ENCODE measurements at regions of chr12 and their contacts with region 1.

Region 1: GRCh38 chr12:56333679-56334489 is at the start of gene PAN2:
- DNase-seq: peak; percentile 84 to 98 (median 89)
- ATAC-seq: peak; percentile 74
- H3K4me3 ChIP-seq: peak within 1 kb of the TSS; percentile 71
- H3K4me3 Mint-ChIP-seq: peak within 1 kb of the TSS; percentile 94
- H3K27ac ChIP-seq: peak within 1 kb of the TSS; percentile 99 to 100
- H3K27ac Mint-ChIP-seq: peak within 1 kb of the TSS; percentile 100
- H3K4me1 ChIP-seq: peaks cover 32% of the 10 kb centered on the region
- H3K4me1 Mint-ChIP-seq: peaks cover 56% of the 10 kb centered on the region
- H3K27me3 ChIP-seq: no peaks in the 10 kb centered on the region
- H3K27me3 Mint-ChIP-seq: no peaks in the 10 kb centered on the region
- CTCF ChIP-seq: peak; percentile 73
- total RNA-seq, gene PAN2: 104 to 107 TPM

Region 2: GRCh38 chr12:55607821-55608594 is 725.9 kb before region 1 on chr12:
- CTCF ChIA-PET with region 1: no interaction called
- POLR2A ChIA-PET with region 1: no interaction called
- intact Hi-C with region 1: no loop called
- DNase-seq: no peak
- ATAC-seq: no peak
- H3K4me3 ChIP-seq: no peak overlapping the region
- H3K4me3 Mint-ChIP-seq: no peak overlapping the region
- H3K27ac ChIP-seq: no peak overlapping the region
- H3K27ac Mint-ChIP-seq: no peak overlapping the region
- H3K4me1 ChIP-seq: no peaks in the 10 kb centered on the region
- H3K4me1 Mint-ChIP-seq: no peaks in the 10 kb centered on the region
- H3K27me3 ChIP-seq: peaks cover 4 to 9% of the 10 kb centered on the region in 2 experiments
- H3K27me3 Mint-ChIP-seq: peaks cover 41% of the 10 kb centered on the region
- CTCF ChIP-seq: no peak

Region 3: GRCh38 chr12:56062996-56063395 is 270.9 kb before region 1 on chr12:
- CTCF ChIA-PET with region 1: no interaction called
- POLR2A ChIA-PET with region 1: no interaction called
- intact Hi-C with region 1: no loop called
- DNase-seq: no peak
- ATAC-seq: no peak
- H3K4me3 ChIP-seq: no peak overlapping the region
- H3K4me3 Mint-ChIP-seq: no peak overlapping the region
- H3K27ac ChIP-seq: no peak overlapping the region
- H3K27ac Mint-ChIP-seq: no peak overlapping the region
- H3K4me1 ChIP-seq: no peaks in the 10 kb centered on the region
- H3K4me1 Mint-ChIP-seq: no peaks in the 10 kb centered on the region
- H3K27me3 ChIP-seq: no peaks in the 10 kb centered on the region
- H3K27me3 Mint-ChIP-seq: no peaks in the 10 kb centered on the region
- CTCF ChIP-seq: no peak

Region 4: DNA sequence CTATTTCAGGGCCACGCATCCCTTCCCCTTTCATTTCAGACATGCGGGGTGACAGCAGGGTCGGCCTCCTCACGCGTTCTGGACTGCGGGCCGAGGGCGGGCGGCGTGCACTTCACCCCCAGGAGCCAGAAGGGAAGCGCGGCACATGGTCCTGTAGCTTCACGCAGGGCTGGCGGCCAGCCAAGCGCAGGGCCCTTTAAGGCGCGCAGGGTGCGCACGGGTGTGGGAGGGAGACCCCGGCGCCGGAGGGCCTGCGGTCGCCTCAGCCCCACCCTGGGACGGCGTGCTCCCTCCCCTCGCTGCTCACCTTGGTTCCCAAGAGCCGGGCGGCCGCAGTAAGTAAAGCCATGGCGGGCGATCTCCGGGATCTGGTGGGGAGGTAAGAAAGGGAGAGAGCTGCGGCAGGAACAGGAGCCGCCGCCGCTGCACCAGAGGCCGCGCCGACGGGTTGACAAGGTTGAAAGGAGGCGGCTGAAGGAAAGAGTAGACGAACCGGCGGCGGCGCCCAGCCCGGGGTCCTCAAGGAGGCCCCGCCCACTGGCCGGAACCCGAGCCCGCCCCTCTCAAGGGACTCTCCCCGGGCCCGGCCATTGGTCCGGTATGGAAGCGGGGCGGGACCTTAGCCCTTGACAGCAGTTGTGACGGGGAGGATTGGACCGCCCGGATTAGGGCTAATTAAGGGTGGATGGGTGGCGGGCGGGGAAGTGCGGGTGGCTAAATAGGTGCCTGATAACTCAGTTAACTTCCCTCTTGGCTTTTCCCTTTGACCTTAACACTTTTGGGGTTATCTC is 33.8 kb before region 1 on chr12 and contains the start of gene CS:
- CTCF ChIA-PET with region 1: no interaction called
- POLR2A ChIA-PET with region 1: no interaction called
- intact Hi-C with region 1: loop called in 1 of 2 experiments (anchors 2 kb)
- DNase-seq: peak; percentile 95 to 99 (median 98)
- ATAC-seq: peak; percentile 91
- H3K4me3 ChIP-seq: peak within 1 kb of the TSS; percentile 72
- H3K4me3 Mint-ChIP-seq: peak within 1 kb of the TSS; percentile 98
- H3K27ac ChIP-seq: peak within 1 kb of the TSS; percentile 91 to 96
- H3K27ac Mint-ChIP-seq: peak within 1 kb of the TSS; percentile 97
- H3K4me1 ChIP-seq: peaks cover 56% of the 10 kb centered on the region
- H3K4me1 Mint-ChIP-seq: peaks cover 68% of the 10 kb centered on the region
- H3K27me3 ChIP-seq: no peaks in the 10 kb centered on the region
- H3K27me3 Mint-ChIP-seq: no peaks in the 10 kb centered on the region
- CTCF ChIP-seq: no peak
- total RNA-seq, gene CS: 139 to 145 TPM

Region 5: DNA sequence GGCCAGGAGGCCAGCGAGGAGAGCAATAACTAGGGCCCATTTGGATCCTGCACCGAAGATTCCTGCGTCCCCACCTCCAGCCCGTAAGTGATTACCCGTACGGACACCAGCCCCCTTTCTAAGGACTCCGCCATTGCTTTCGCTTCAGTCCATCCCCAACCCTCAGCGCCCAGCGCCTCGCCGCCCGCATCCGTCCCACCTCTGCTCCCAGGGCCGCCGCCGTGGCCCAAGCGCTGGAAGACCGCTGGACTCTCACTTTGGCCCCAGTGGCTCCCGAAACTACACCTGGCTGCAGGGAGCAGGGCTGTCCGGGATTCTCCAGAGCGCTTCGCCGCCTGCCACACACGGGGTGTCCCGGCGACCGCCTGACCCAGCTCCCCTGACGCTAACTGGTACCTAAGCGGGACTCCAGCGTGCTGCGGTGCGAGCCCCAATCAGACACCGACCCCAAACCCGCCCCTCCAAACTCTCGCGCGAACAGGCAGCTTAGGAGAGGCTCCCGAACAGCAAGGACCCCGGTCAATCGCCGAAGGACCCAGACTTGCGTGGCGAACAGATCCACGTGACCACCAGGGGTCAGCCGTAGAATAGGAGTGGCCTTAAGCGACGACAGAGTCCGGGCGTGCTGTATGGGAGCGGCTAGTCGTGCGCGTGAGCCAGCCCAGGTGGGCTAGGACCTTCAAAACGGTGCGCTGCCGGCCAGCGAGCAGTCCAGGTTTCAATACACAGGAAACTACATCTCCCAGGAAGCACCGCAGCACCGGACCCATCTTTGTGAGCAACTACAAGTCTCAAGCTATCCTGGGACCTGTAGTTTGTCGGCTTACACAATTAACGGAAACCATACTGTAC is 18.0 kb before region 1 on chr12 and contains the start of gene CNPY2:
- CTCF ChIA-PET with region 1: interaction called, 5 read pairs
- POLR2A ChIA-PET with region 1: interaction called, 56 read pairs
- intact Hi-C with region 1: loop called (anchors 2 kb)
- DNase-seq: peak; percentile 86 to 96 (median 90)
- ATAC-seq: peak; percentile 93
- H3K4me3 ChIP-seq: peak within 1 kb of the TSS; percentile 100
- H3K4me3 Mint-ChIP-seq: peak within 1 kb of the TSS; percentile 99
- H3K27ac ChIP-seq: peak within 1 kb of the TSS; percentile 84 to 98
- H3K27ac Mint-ChIP-seq: peak within 1 kb of the TSS; percentile 98
- H3K4me1 ChIP-seq: peaks cover 17% of the 10 kb centered on the region
- H3K4me1 Mint-ChIP-seq: peaks cover 19% of the 10 kb centered on the region
- H3K27me3 ChIP-seq: no peaks in the 10 kb centered on the region
- H3K27me3 Mint-ChIP-seq: no peaks in the 10 kb centered on the region
- CTCF ChIP-seq: no peak
- total RNA-seq, gene CNPY2: 30.5 to 33.4 TPM

Region 6: GRCh38 chr12:56346703-56347102 is 12.8 kb after region 1 on chr12:
- CTCF ChIA-PET with region 1: interaction called, 8 read pairs
- POLR2A ChIA-PET with region 1: interaction called, 15 read pairs
- intact Hi-C with region 1: no loop called
- DNase-seq: peak in 4 of 14 experiments; percentile 14 to 54 (median 30)
- ATAC-seq: no peak
- H3K4me3 ChIP-seq: no peak overlapping the region
- H3K4me3 Mint-ChIP-seq: no peak overlapping the region
- H3K27ac ChIP-seq: no peak overlapping the region
- H3K27ac Mint-ChIP-seq: no peak overlapping the region
- H3K4me1 ChIP-seq: peaks cover under 1% of the 10 kb centered on the region
- H3K4me1 Mint-ChIP-seq: peaks cover under 1% of the 10 kb centered on the region
- H3K27me3 ChIP-seq: no peaks in the 10 kb centered on the region
- H3K27me3 Mint-ChIP-seq: no peaks in the 10 kb centered on the region
- CTCF ChIP-seq: no peak

Region 7: GRCh38 chr12:56448860-56449621 is 115.2 kb after region 1 on chr12 and contains the start of gene TIMELESS:
- CTCF ChIA-PET with region 1: no interaction called
- POLR2A ChIA-PET with region 1: interaction called, 14 read pairs
- intact Hi-C with region 1: no loop called
- DNase-seq: peak; percentile 62 to 93 (median 78)
- ATAC-seq: peak; percentile 96
- H3K4me3 ChIP-seq: peak within 1 kb of the TSS; percentile 70
- H3K4me3 Mint-ChIP-seq: peak within 1 kb of the TSS; percentile 93
- H3K27ac ChIP-seq: peak within 1 kb of the TSS; percentile 25 to 77
- H3K27ac Mint-ChIP-seq: peak within 1 kb of the TSS; percentile 92
- H3K4me1 ChIP-seq: peaks cover 12% of the 10 kb centered on the region
- H3K4me1 Mint-ChIP-seq: peaks cover 21% of the 10 kb centered on the region
- H3K27me3 ChIP-seq: no peaks in the 10 kb centered on the region
- H3K27me3 Mint-ChIP-seq: no peaks in the 10 kb centered on the region
- CTCF ChIP-seq: no peak
- total RNA-seq, gene TIMELESS: 3.0 to 3.1 TPM

Region 8: DNA sequence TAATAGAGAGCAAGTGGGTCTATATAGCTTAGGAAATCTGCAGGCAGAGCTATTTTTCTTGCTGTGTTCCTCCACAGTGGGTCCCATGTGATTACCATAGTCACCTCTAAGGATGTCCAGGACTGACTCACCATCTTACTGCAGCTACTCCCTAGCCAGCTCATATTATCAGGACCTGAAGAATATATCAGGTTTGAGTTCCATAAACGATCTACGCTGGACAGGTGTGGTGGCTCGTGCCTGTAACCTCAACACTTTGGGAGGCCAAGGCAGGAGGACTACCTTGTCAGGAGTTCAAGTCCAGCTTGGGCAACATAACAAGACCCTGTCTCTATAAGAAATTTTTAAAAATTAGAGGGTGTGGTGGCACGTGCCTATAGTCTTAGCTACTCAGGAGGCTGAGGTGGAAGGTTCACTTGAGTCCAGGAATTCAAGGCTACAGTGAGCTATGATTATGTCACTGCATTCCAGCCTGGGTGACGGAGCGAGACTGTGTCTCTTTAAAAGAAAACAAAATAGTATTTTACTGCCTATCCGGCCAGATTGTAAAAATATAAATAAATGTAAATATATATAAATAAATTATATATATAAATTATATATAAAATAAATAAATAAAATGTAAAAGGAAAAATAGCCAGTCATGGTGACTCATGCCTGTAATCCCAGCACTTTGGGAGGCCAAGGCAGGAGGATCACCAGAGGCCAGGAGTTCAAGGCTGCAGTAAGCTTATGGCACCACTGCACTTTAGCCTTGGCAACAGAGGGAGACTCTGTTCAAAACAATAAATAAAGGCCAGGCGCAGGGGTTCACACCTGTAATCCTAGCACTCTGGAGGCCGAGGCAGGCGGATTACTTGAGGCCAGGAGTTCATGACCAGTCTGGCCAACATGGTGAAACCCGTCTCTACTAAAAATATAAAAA is 127.6 kb after region 1 on chr12:
- CTCF ChIA-PET with region 1: interaction called, 8 read pairs
- POLR2A ChIA-PET with region 1: interaction called, 18 read pairs
- intact Hi-C with region 1: loop called (anchors 1 to 5 kb)
- DNase-seq: no peak
- ATAC-seq: no peak
- H3K4me3 ChIP-seq: no peak overlapping the region
- H3K4me3 Mint-ChIP-seq: no peak overlapping the region
- H3K27ac ChIP-seq: no peak overlapping the region
- H3K27ac Mint-ChIP-seq: no peak overlapping the region
- H3K4me1 ChIP-seq: peaks cover 4% of the 10 kb centered on the region
- H3K4me1 Mint-ChIP-seq: peaks cover 5% of the 10 kb centered on the region
- H3K27me3 ChIP-seq: no peaks in the 10 kb centered on the region
- H3K27me3 Mint-ChIP-seq: no peaks in the 10 kb centered on the region
- CTCF ChIP-seq: no peak

Region 9: GRCh38 chr12:56468216-56469006 is 134.5 kb after region 1 on chr12 and contains the start of gene SPRYD4:
- CTCF ChIA-PET with region 1: interaction called, 8 read pairs
- POLR2A ChIA-PET with region 1: interaction called, 18 read pairs
- intact Hi-C with region 1: loop called (anchors 1 to 5 kb)
- DNase-seq: peak; percentile 88 to 98 (median 93)
- ATAC-seq: peak; percentile 90
- H3K4me3 ChIP-seq: peak within 1 kb of the TSS; percentile 87
- H3K4me3 Mint-ChIP-seq: peak within 1 kb of the TSS; percentile 96
- H3K27ac ChIP-seq: peak within 1 kb of the TSS; percentile 68 to 94
- H3K27ac Mint-ChIP-seq: peak within 1 kb of the TSS; percentile 97
- H3K4me1 ChIP-seq: peaks cover 29% of the 10 kb centered on the region
- H3K4me1 Mint-ChIP-seq: peaks cover 31% of the 10 kb centered on the region
- H3K27me3 ChIP-seq: no peaks in the 10 kb centered on the region
- H3K27me3 Mint-ChIP-seq: no peaks in the 10 kb centered on the region
- CTCF ChIP-seq: peak; percentile 34
- total RNA-seq, gene SPRYD4: 7.4 to 7.9 TPM

Region 10: DNA sequence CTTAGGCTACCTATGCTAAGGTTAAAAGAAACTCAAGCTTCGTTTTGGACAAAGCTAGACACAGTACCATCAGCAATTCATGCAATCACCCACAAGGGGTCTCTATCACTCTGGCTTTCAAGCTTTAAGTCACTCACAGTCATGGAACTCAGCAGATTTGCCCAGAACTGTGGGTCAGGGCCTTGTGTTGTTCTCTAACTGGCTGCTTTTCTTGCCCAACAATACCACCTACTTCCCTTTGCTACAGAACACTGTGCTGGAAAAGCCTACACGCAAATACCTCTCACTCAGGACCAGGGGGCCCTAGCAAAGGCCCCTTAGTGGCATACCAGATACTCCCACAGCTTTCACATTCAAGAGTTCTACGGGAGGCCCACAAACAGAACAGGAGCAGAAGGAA is 735.6 kb after region 1 on chr12:
- CTCF ChIA-PET with region 1: no interaction called
- POLR2A ChIA-PET with region 1: no interaction called
- intact Hi-C with region 1: no loop called
- DNase-seq: peak in 13 of 14 experiments; percentile 20 to 89 (median 51)
- ATAC-seq: peak; percentile 99
- H3K4me3 ChIP-seq: no peak overlapping the region
- H3K4me3 Mint-ChIP-seq: peak overlapping the region; percentile 18
- H3K27ac ChIP-seq: peak overlapping the region; percentile 34 to 38
- H3K27ac Mint-ChIP-seq: peak overlapping the region; percentile 81
- H3K4me1 ChIP-seq: peaks cover 9% of the 10 kb centered on the region
- H3K4me1 Mint-ChIP-seq: peaks cover 31% of the 10 kb centered on the region
- H3K27me3 ChIP-seq: no peaks in the 10 kb centered on the region
- H3K27me3 Mint-ChIP-seq: no peaks in the 10 kb centered on the region
- CTCF ChIP-seq: peak; percentile 87

Measured in CD4-positive, alpha-beta T cell (primary cell).